ENCODE measurements at regions of chr1 and their contacts with region 1.

Region 1: GRCh38 chr1:115771847-115772457 is 3.4 kb upstream of the CASQ2 start:
- DNase-seq: peak; percentile 46
- H3K4me3 ChIP-seq: peak overlapping the region; percentile 18; the same call in 1 of the 2 replicates
- CTCF ChIP-seq: peak; percentile 65

Region 2: DNA sequence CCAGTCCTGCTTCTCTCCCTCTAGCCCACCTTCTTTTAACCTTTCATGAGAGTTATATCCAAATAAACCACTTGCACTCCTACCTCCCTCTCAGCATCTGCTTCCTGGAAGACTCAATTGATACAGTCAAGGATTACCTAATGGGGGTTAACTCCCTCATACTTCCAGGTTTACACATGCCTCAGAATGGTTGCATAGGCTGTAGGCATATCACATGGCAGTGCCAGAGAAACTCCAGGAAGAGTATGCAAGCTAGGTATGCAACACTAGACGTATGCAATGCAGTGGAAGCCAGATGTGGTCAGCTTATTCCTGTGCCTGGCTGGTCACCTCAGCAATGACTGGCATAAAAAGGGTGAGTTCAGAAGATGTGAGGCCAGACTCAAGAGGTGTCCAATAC is 162.9 kb before region 1 on chr1:
- CTCF ChIA-PET with region 1: interaction called, 174 read pairs
- POLR2A ChIA-PET with region 1: no interaction called
- DNase-seq: no peak
- H3K4me3 ChIP-seq: no peak overlapping the region
- CTCF ChIP-seq: no peak

Region 3: GRCh38 chr1:115782571-115783281 is 10.8 kb after region 1 on chr1:
- CTCF ChIA-PET with region 1: interaction called, 35 read pairs
- POLR2A ChIA-PET with region 1: no interaction called
- DNase-seq: peak; percentile 50
- H3K4me3 ChIP-seq: no peak overlapping the region
- CTCF ChIP-seq: no peak

Region 4: DNA sequence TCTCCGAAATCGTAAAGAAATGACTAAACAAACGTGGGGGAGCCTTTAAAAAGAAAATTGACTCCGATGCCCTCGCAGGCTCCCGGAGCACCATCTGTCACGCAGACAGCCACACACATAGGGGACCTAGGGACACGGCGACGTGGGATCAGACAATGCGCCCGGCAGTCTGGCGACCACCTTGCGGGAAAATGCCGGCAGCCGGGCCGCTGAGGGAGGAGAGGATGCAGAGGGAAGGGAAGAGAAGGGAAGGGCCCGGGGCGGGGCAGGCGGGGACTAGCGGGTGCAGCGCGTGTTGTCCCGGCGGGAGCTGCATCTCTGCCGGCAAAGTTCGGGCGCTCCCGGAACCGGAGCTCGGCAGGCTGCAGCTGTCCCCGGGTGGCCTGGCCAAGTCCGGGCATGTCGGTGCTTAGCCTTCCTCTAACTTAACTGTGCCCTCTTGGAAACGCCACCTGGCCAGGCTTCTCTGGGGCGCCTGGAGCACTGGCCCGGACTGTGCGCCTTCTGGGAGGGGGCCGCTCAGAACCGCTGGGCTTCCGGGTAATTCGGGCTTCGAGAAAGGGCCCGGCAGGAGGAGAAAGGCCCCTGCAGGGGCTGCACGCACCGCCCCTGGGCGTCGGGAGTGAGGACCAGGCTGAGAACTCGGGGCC is 67.2 kb after region 1 on chr1:
- CTCF ChIA-PET with region 1: no interaction called
- POLR2A ChIA-PET with region 1: no interaction called
- DNase-seq: no peak
- H3K4me3 ChIP-seq: peak overlapping the region; percentile 1; the same call in 1 of the 2 replicates
- CTCF ChIP-seq: no peak